Heart right ventricle (tissue), 16 donors: ENCODE measurements at regions of chr3 and their contacts with region 1.

Region 1: DNA sequence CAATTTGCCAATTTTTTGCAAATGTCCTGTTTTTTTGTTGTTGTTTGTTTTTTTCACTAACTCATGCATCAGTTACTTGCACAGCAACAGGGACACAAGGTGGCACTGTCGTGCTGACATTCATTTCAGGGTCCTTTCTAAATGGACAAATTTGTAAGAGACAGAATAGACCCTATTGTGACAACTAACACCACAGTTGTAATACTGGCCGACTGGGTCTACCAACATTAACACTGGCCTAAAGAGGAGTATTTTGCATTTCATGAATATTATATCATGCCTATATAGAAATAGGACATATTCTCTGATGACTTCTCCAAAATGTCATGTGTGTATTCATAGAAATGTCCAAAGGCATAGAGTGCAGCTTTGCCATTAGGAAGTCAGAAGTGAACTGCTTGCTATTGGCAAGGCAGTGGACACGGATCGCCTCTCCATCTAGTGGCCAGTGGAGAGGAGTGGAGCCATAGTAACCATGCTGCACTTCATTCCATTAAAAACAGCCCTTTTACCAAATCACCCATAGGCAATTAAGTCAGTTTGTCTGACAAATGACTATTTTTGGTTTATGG is 54.8 kb downstream of the ZBTB20 start:
- DNase-seq: peak; percentile 41 to 74
- ATAC-seq: peak; percentile 95 to 99 (median 98)
- H3K4me3 ChIP-seq: no peak overlapping the region
- H3K27ac ChIP-seq: peak overlapping the region in 6 of 10 donors; percentile 7 to 48 (median 34)
- H3K4me1 ChIP-seq: peaks cover 0 to 78% (median 41%) of the 10 kb centered on the region in 9 donors
- H3K27me3 ChIP-seq: no peaks in the 10 kb centered on the region
- CTCF ChIP-seq: peak; percentile 44 to 82 (median 70)

Region 2: DNA sequence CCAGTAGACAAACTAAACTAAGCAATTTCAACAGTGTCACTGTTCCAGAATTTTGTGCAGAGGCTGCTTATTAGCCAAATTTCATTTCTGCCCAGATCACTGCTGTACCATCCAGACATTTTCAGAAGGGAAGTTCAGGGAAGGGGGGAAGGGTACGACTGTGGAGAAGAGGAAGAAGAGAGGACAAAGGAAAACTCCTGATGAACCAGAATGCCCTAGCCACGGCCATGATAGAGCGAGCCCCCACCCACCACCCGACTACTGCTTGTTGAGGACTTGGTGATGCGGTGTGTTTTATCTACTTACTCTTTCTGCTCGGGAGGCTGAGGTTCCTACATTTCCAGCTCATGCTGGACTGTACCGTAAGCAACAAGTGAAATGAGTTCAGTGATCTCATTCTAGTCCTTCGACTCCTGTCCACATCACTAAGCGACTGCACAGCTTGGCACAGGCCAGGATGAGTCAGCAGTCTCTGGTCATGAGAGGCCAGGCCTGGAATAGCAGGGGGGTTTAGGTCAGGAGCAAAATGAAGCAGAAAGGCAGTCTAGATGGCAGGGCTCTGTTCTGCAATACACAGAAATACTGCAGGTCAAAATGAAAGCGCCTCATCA is 467.6 kb before region 1 on chr3:
- intact Hi-C with region 1: loop called in 1 of 10 experiments (anchors 10 kb)
- DNase-seq: peak; percentile 89 to 94
- ATAC-seq: peak; percentile 93 to 97 (median 94)
- H3K4me3 ChIP-seq: peak overlapping the region; percentile 23 to 59 (median 50)
- H3K27ac ChIP-seq: peak overlapping the region; percentile 88 to 98 (median 95)
- H3K4me1 ChIP-seq: peaks cover 9 to 87% (median 63%) of the 10 kb centered on the region in 9 donors
- H3K27me3 ChIP-seq: no peaks in the 10 kb centered on the region
- CTCF ChIP-seq: no peak

Region 3: GRCh38 chr3:115040673-115041286 is 51.5 kb before region 1 on chr3:
- intact Hi-C with region 1: loop called in 2 of 10 experiments (anchors 5 kb)
- DNase-seq: peak in 1 of 2 donors; percentile 6
- ATAC-seq: no peak
- H3K4me3 ChIP-seq: no peak overlapping the region
- H3K27ac ChIP-seq: no peak overlapping the region
- H3K4me1 ChIP-seq: peaks cover 0 to 24% (median 6%) of the 10 kb centered on the region in 9 donors
- H3K27me3 ChIP-seq: no peaks in the 10 kb centered on the region
- CTCF ChIP-seq: peak; percentile 33 to 75 (median 64)

Region 4: GRCh38 chr3:115160295-115160694 is 68.0 kb after region 1 on chr3:
- intact Hi-C with region 1: loop called in 4 of 10 experiments (anchors 5 kb)
- DNase-seq: no peak
- ATAC-seq: no peak
- H3K4me3 ChIP-seq: no peak overlapping the region
- H3K27ac ChIP-seq: no peak overlapping the region
- H3K4me1 ChIP-seq: peaks cover 0 to 14% (median 0%) of the 10 kb centered on the region in 9 donors
- H3K27me3 ChIP-seq: no peaks in the 10 kb centered on the region
- CTCF ChIP-seq: no peak

Region 5: GRCh38 chr3:115692887-115693524 is 600.7 kb after region 1 on chr3:
- intact Hi-C with region 1: loop called in 1 of 10 experiments (anchors 5 kb)
- DNase-seq: peak; percentile 39 to 80
- ATAC-seq: peak; percentile 87 to 98 (median 95)
- H3K4me3 ChIP-seq: no peak overlapping the region
- H3K27ac ChIP-seq: peak overlapping the region in 1 of 10 donors; percentile 59
- H3K4me1 ChIP-seq: peaks cover 0 to 10% (median 0%) of the 10 kb centered on the region in 9 donors
- H3K27me3 ChIP-seq: no peaks in the 10 kb centered on the region
- CTCF ChIP-seq: peak; percentile 65 to 90 (median 82)